Right ventricle myocardium inferior (tissue), 1 donor: ENCODE measurements at regions of chr1 and their contacts with region 1.

Region 1: DNA sequence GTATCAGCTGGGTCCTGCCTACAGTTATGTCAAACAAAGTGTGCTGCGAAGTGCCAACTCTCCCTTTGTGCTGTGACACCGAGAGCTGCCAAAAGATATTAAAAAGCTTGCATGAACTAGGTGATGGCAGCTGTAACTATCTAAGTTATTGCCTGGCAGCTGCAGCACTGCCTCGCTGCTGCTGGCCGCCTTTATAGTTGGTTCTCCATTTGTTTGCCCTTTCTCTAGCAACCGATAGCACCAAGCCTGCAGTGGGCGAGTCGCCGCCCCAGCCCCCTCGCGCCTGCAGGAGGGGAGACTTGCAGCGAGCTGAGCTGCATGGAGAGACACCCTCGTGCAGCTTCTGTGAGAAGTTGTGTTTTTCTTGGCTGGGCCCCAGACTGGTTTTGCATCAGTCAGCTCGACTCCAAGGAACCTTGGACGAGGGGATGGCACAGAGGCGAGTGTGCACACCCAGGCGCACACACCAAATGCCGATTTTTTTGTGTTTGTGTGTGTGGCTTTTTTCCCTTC is 330.6 kb downstream of the RPS6KC1 start:
- DNase-seq: peak; percentile 81
- ATAC-seq: peak; percentile 88

Region 2: GRCh38 chr1:213327017-213327667 is 54.5 kb before region 1 on chr1:
- intact Hi-C with region 1: no loop called
- DNase-seq: no peak
- ATAC-seq: peak; percentile 63

Region 3: DNA sequence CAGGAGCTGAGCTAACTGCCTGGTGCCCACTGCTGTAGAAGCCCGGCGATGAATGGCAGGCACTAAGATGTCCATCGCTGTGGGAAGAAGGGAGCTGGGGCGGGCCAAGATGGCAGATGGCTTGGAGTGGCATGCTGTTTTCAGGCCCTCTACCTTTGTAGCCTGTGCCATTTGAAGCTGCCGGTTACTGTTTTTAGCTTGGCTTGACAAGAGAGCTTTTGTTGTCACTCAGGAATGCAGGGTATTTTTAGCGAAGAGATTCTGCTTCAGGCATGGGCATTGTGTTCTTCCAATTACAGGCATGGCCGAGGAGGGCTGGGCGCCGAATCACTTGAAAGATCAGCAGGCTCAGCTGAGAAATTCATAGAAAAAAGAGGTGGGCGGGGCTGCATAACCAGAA is 18.1 kb after region 1 on chr1:
- intact Hi-C with region 1: loop called (anchors 2 kb)
- DNase-seq: no peak
- ATAC-seq: peak; percentile 84